ENCODE measurements at regions of chr12 and their contacts with region 1.

Region 1: DNA sequence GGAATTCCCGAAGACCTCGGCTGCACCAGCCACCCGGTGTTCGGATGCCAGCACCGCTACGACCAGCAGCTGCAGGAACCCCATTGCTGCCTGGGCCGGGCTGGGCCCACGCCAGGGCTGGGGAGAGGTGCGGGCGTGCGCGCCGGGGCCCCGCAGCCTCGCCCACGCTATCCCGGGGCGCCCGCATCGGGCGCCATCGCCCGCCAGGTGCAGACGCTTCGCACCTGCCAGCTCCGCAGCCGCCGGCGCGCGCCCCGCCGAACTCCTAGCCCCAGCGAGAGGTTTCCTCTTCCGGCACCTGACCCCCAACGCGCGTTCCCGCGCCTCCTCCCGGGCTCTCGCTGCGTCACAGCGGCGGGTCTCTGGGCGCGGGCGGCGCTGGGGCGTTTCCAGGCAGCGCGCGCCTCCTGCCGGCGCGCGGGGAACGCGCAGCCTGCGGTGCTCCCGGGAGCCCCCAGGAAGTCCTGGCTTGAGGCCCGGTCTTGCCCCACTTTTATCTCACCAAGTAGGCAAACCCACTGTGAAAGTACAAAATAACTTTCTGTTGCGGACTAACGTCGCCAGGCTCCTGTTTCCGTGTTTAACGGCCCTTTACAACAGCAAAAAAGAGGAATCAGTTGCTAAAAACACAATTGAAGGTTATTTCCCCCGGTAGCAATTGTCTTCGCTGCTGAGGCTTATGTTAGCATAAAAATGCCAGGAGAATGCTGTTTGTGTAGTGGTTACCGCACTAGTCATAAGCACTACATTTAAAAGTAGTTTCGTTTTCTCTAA is at the start of gene TM7SF3:
- DNase-seq: peak; percentile 77
- ATAC-seq: peak; percentile 95
- H3K4me3 ChIP-seq: peak within 1 kb of the TSS; percentile 47 to 87
- H3K27ac ChIP-seq: peak within 1 kb of the TSS; percentile 61
- H3K4me1 ChIP-seq: peaks cover 18 to 34% of the 10 kb centered on the region in 2 experiments; a peak in 3 of 4 replicates
- H3K27me3 ChIP-seq: no peaks in the 10 kb centered on the region
- CTCF ChIP-seq: peak; percentile 78 to 97 (median 84)
- POLR2A ChIP-seq: peak; percentile 47
- RAD21 ChIP-seq: peak; percentile 82
- total RNA-seq, gene TM7SF3: 46.5 TPM

Region 2: GRCh38 chr12:26853303-26854030 is 160.8 kb before region 1 on chr12:
- CTCF ChIA-PET with region 1: interaction called, 5 read pairs
- POLR2A ChIA-PET with region 1: no interaction called
- RAD21 ChIA-PET with region 1: no interaction called
- intact Hi-C with region 1: loop called (anchors 1 kb)
- DNase-seq: no peak
- ATAC-seq: peak; percentile 96
- H3K4me3 ChIP-seq: no peak overlapping the region
- H3K27ac ChIP-seq: no peak overlapping the region
- H3K4me1 ChIP-seq: 0 out of 4 replicates have a peak, but pooled peaks cover 0 to 3% of the 10 kb centered on the region in 2 experiments
- H3K27me3 ChIP-seq: no peaks in the 10 kb centered on the region
- CTCF ChIP-seq: peak; percentile 84 to 93 (median 91)
- POLR2A ChIP-seq: no peak
- RAD21 ChIP-seq: peak; percentile 75

Region 3: DNA sequence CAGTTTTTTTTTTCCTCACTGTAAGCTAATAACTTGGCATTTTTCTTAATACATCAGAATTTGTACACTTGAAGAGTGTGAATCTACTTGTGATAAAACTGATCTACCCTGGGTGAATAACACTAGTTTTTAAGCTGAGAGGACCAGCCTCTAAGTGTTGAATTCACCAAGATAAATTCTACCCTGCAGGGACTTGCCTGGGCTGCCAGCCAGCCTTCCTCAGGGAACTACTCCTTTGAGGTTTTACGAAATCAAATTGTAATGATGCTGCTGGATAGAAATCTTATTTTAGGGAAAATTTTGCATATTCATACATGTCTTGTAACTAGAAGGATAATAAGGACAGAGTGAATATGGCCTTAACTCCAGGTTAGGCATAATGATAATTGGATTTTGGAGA is 10.0 kb after region 1 on chr12:
- CTCF ChIA-PET with region 1: interaction called, 12 read pairs
- POLR2A ChIA-PET with region 1: interaction called, 3 read pairs
- RAD21 ChIA-PET with region 1: no interaction called
- intact Hi-C with region 1: no loop called
- DNase-seq: no peak
- ATAC-seq: no peak
- H3K4me3 ChIP-seq: no peak overlapping the region
- H3K27ac ChIP-seq: no peak overlapping the region
- H3K4me1 ChIP-seq: peaks cover 6 to 16% of the 10 kb centered on the region in 2 experiments; a peak in 3 of 4 replicates
- H3K27me3 ChIP-seq: no peaks in the 10 kb centered on the region
- CTCF ChIP-seq: no peak
- POLR2A ChIP-seq: no peak
- RAD21 ChIP-seq: no peak

Region 4: GRCh38 chr12:27243804-27244683 is 229.8 kb after region 1 on chr12 and contains the start of gene STK38L:
- CTCF ChIA-PET with region 1: no interaction called
- POLR2A ChIA-PET with region 1: no interaction called
- RAD21 ChIA-PET with region 1: no interaction called
- intact Hi-C with region 1: loop called (anchors 1 kb)
- DNase-seq: peak; percentile 96
- ATAC-seq: peak; percentile 99
- H3K4me3 ChIP-seq: peak within 1 kb of the TSS; percentile 84 to 92
- H3K27ac ChIP-seq: peak within 1 kb of the TSS; percentile 46
- H3K4me1 ChIP-seq: peaks cover 5 to 11% of the 10 kb centered on the region in 2 experiments; a peak in 3 of 4 replicates
- H3K27me3 ChIP-seq: no peaks in the 10 kb centered on the region
- CTCF ChIP-seq: peak in 2 of 3 experiments; percentile 9 to 16; a peak in 1 of 6 replicates
- POLR2A ChIP-seq: peak; percentile 88
- RAD21 ChIP-seq: peak; percentile 52
- total RNA-seq, gene STK38L: 23.9 TPM

Region 5: DNA sequence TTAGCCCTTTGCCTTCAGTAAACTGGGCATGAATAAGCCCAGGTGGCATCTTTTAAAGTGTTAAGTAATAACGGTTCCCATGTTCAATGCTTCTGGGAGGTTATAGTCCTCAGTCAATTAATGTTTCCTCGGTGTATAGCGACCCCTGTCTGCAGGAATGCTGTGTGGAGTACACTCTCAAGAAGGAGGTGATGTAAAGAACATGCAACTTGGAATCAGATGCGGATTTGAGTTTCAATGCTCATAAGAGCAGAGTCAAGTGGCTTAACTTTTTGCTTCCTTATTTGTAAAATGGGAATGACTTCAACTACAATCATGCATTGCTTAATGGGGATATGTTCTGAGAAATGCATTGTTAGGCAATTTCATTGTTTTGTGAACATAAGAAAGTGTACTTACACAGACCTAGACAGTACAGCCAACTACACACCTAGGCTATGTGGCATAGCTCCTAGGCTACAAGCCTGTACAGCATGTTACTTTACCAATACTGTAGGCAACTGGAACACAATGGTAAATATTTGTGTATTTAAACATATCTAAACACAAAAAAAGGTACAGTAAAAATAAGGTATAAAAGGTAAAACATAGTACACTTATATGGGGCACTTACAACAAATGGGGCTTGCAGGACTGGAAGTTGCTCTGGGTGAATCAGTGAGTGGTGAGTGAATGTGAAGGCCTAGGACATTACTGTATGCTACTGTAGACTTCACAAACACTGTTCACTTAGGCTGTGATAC is 689.6 kb after region 1 on chr12:
- CTCF ChIA-PET with region 1: interaction called, 4 read pairs
- POLR2A ChIA-PET with region 1: no interaction called
- RAD21 ChIA-PET with region 1: no interaction called
- intact Hi-C with region 1: loop called (anchors 10 kb)
- DNase-seq: peak; percentile 87
- ATAC-seq: peak; percentile 99
- H3K4me3 ChIP-seq: no peak overlapping the region
- H3K27ac ChIP-seq: no peak overlapping the region
- H3K4me1 ChIP-seq: no peaks in the 10 kb centered on the region
- H3K27me3 ChIP-seq: no peaks in the 10 kb centered on the region
- CTCF ChIP-seq: peak; percentile 73 to 97 (median 89)
- POLR2A ChIP-seq: no peak
- RAD21 ChIP-seq: peak; percentile 86